PC-3 (cell line): ENCODE measurements at regions of chr5 and their contacts with region 1.

Region 1: GRCh38 chr5:59483971-59484472 is 409.5 kb downstream of the PDE4D start:
- DNase-seq: no peak
- ATAC-seq: no peak
- H3K4me3 ChIP-seq: no peak overlapping the region
- H3K27ac ChIP-seq: no peak overlapping the region
- H3K4me1 ChIP-seq: no peaks in the 10 kb centered on the region
- H3K27me3 ChIP-seq: no peaks in the 10 kb centered on the region
- CTCF ChIP-seq: no peak

Region 2: GRCh38 chr5:59466271-59466670 is 17.8 kb before region 1 on chr5:
- CTCF ChIA-PET with region 1: no interaction called
- POLR2A ChIA-PET with region 1: interaction called, 10 read pairs
- intact Hi-C with region 1: no loop called
- DNase-seq: no peak
- ATAC-seq: no peak
- H3K4me3 ChIP-seq: no peak overlapping the region
- H3K27ac ChIP-seq: no peak overlapping the region
- H3K4me1 ChIP-seq: no peaks in the 10 kb centered on the region
- H3K27me3 ChIP-seq: no peaks in the 10 kb centered on the region
- CTCF ChIP-seq: no peak